Mammary epithelial cell (primary cell): ENCODE measurements at regions of chr15 and their contacts with region 1.

Region 1: DNA sequence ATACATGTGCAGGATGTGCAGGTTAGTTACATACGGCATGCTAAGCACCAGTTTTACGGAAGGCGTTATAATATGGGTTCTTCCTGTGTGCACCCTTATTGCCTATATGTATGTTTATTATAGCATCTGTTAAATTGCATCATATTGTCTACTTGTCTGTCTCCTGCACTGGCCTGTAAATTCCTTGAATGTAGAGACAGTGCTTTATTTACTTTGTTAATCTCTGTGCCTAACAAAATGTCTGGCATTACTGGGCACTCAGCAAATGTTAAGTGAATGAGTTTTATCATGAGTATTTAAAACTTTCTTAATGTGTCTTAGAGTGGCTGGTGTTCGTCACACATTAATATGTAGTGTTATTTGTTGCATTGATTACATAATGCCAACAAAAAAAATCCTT is 23.8 kb downstream of the MGA start:
- DNase-seq: no peak
- H3K4me3 ChIP-seq: no peak overlapping the region
- H3K27ac ChIP-seq: no peak overlapping the region
- H3K4me1 ChIP-seq: no peaks in the 10 kb centered on the region
- H3K27me3 ChIP-seq: no peaks in the 10 kb centered on the region
- CTCF ChIP-seq: no peak

Region 2: GRCh38 chr15:41746802-41747201 is 62.8 kb after region 1 on chr15:
- CTCF ChIA-PET with region 1: no interaction called
- dilution Hi-C with region 1: loop called (anchors 5 kb)
- in situ Hi-C with region 1: no loop called
- intact Hi-C with region 1: no loop called
- DNase-seq: peak; percentile 19
- H3K4me3 ChIP-seq: no peak overlapping the region
- H3K27ac ChIP-seq: no peak overlapping the region
- H3K4me1 ChIP-seq: no peaks in the 10 kb centered on the region
- H3K27me3 ChIP-seq: no peaks in the 10 kb centered on the region
- CTCF ChIP-seq: no peak